Calu3 (cell line): ENCODE measurements at regions of chr22 and their contacts with region 1.

Region 1: DNA sequence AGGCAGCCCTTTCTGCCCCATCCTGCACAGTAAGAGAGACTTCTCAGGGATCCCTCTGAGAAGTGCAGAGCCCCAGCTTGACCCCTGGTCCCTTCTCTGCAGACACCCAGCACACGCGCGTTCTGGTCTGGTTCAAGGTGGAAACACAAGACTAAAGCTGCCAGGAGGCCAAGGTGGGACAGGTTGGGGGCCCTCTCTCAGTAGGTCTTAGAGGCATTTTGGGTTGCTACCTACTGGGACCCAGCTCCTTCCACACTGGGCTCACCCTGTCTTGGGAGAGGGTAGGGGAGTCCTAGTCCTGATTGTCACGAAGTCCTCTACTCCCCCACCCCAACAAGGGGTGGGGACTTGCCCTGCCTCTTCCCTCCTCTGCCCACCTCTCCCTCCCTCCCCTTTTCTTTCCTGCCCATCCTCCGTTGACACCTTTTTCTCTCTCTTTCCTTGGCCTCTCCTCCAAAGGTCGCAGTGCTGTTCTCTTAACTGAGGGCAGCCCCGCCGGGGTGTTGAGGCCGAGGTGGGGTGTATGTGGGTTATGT is 763 bp upstream of the SOX10 start:
- DNase-seq: no peak
- H3K4me3 Mint-ChIP-seq: no peak overlapping the region
- H3K27ac Mint-ChIP-seq: no peak overlapping the region
- H3K4me1 Mint-ChIP-seq: no peaks in the 10 kb centered on the region
- H3K27me3 Mint-ChIP-seq: no peaks in the 10 kb centered on the region
- CTCF ChIP-seq: no peak

Region 2: DNA sequence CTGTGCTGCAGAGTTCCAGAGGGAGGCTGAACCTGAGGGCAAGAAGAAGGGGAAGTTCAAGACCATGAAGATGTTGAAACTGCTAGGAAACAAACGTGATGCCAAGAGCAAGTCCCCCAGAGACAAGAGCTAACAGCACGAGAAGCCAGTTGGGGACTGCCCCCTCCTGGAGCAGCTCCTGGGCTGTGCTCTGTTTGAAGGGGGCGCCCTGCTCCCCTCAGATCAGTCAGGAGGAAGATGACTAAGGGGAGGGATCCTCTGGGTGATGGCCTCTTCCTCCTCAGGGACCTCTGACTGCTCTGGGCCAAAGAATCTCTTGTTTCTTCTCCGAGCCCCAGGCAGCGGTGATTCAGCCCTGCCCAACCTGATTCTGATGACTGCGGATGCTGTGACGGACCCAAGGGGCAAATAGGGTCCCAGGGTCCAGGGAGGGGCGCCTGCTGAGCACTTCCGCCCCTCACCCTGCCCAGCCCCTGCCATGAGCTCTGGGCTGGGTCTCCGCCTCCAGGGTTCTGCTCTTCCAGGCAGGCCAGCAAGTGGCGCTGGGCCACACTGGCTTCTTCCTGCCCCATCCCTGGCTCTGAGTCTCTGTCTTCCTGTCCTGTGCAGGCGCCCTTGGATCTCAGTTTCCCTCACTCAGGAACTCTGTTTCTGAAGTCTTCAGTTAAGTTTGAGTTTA is 44.3 kb before region 1 on chr22:
- CTCF ChIA-PET with region 1: no interaction called
- intact Hi-C with region 1: no loop called
- DNase-seq: no peak
- H3K4me3 Mint-ChIP-seq: no peak overlapping the region
- H3K27ac Mint-ChIP-seq: no peak overlapping the region
- H3K4me1 Mint-ChIP-seq: no peaks in the 10 kb centered on the region
- H3K27me3 Mint-ChIP-seq: no peaks in the 10 kb centered on the region
- CTCF ChIP-seq: no peak

Region 3: DNA sequence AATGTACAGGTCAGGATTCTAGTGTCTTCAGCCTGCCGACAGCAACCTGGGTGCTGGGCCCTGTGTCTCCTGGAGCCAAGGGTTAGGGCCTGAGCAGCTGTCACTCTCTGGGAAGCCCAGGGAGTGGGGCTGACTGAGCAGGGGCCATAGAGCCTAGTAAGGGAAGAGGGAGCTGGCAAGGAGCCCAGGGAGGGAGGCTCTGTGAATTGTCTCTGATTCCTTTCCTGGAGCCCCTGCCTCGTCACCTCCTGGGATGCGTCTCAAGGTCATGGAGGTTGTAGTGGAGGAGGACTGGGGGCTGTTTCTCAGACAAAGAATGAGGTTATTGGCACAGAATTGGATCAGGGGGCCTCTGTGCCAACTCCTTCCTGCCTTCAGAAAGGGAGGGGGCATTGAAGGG is 12.6 kb before region 1 on chr22:
- CTCF ChIA-PET with region 1: interaction called, 11 read pairs
- intact Hi-C with region 1: no loop called
- DNase-seq: no peak
- H3K4me3 Mint-ChIP-seq: no peak overlapping the region
- H3K27ac Mint-ChIP-seq: no peak overlapping the region
- H3K4me1 Mint-ChIP-seq: no peaks in the 10 kb centered on the region
- H3K27me3 Mint-ChIP-seq: no peaks in the 10 kb centered on the region
- CTCF ChIP-seq: no peak